B cell (primary cell): ENCODE measurements at regions of chr6 and their contacts with region 1.

Region 1: DNA sequence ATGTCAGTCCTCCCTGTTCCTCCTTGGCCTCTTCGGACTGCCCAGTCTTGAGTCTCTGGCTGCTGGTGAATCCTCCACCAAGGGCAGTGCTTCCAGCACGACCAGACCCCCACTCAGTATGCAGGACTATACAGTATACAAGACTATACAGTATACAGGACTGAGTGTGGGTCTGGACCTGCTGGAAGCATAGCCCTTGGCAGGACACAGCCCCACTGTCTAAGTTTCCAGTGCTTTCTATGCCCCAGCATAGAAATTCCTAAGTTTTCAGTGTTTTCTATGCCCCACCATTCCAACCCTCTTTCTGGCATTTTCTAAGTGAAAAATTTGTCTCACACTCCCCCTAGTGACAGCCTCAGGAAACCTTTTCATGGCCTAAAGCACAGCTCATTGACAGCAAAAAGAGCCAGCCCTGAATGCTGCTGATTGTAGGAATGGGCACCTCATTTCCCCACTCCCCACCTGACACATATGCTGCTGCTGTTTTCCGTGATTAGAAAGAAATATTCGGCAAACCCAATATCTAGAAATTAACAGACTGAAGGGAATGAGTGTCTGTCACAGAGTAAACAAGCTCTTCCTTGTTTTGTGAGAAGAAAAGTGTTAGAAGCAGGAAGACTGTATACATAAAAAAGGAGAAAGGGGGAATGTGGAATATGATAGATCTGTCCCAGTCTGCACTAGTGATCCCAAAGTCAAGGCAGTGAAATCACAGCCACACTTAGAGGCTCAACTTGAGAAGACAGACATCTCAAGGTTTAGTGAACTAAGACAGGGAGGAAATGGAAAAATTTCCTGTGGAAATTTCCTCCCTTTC is 206.9 kb downstream of the IBTK start:
- DNase-seq: peak; percentile 14
- ATAC-seq: no peak
- H3K4me3 ChIP-seq: no peak overlapping the region
- H3K4me3 Mint-ChIP-seq: no peak overlapping the region
- H3K27ac ChIP-seq: no peak overlapping the region
- H3K27ac Mint-ChIP-seq: no peak overlapping the region
- H3K4me1 ChIP-seq: no peaks in the 10 kb centered on the region
- H3K4me1 Mint-ChIP-seq: no peaks in the 10 kb centered on the region
- H3K27me3 ChIP-seq: no peaks in the 10 kb centered on the region
- H3K27me3 Mint-ChIP-seq: peaks cover 5% of the 10 kb centered on the region
- CTCF ChIP-seq: peak; percentile 68

Region 2: DNA sequence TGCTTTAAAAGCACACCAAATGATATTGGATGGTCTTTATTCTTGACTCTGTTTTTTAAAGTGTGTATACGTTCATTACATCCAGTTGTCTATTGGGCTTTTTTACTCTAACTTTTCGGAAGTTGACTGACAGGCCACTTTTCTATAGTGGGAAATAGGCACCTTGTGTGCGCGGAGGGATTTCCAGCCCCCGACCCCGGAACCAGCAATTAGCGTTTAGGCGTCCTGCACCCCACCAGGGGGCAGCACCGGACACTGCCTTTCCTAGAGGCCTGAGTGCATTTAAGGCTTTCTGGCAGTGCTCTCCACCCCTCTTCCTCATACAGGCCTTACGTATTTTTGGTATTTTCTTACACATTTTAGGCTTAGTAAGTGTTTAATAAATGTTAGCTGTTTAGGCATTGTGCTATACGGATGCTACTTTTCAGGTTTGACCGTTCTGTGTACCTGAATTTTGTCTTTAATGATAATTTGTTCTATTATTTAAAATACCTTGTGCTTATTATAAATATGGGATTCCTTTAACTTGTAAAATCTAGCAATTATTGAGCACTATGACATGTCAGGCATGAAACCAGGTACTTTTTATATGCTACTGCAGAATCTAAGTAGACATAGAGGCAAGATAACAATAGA is 1702.3 kb before region 1 on chr6:
- CTCF ChIA-PET with region 1: no interaction called
- POLR2A ChIA-PET with region 1: no interaction called
- intact Hi-C with region 1: loop called (anchors 10 kb)
- DNase-seq: peak; percentile 61
- ATAC-seq: peak; percentile 64
- H3K4me3 ChIP-seq: no peak overlapping the region
- H3K4me3 Mint-ChIP-seq: no peak overlapping the region
- H3K27ac ChIP-seq: no peak overlapping the region
- H3K27ac Mint-ChIP-seq: no peak overlapping the region
- H3K4me1 ChIP-seq: no peaks in the 10 kb centered on the region
- H3K4me1 Mint-ChIP-seq: peaks cover 4% of the 10 kb centered on the region
- H3K27me3 ChIP-seq: no peaks in the 10 kb centered on the region
- H3K27me3 Mint-ChIP-seq: no peaks in the 10 kb centered on the region
- CTCF ChIP-seq: peak; percentile 85

Region 3: GRCh38 chr6:81981812-81982211 is 58.8 kb before region 1 on chr6:
- CTCF ChIA-PET with region 1: no interaction called
- POLR2A ChIA-PET with region 1: no interaction called
- intact Hi-C with region 1: no loop called
- DNase-seq: no peak
- ATAC-seq: no peak
- H3K4me3 ChIP-seq: no peak overlapping the region
- H3K4me3 Mint-ChIP-seq: no peak overlapping the region
- H3K27ac ChIP-seq: no peak overlapping the region
- H3K27ac Mint-ChIP-seq: no peak overlapping the region
- H3K4me1 ChIP-seq: no peaks in the 10 kb centered on the region
- H3K4me1 Mint-ChIP-seq: no peaks in the 10 kb centered on the region
- H3K27me3 ChIP-seq: no peaks in the 10 kb centered on the region
- H3K27me3 Mint-ChIP-seq: no peaks in the 10 kb centered on the region
- CTCF ChIP-seq: no peak